ENCODE measurements at regions of chr22 and their contacts with region 1.

Region 1: DNA sequence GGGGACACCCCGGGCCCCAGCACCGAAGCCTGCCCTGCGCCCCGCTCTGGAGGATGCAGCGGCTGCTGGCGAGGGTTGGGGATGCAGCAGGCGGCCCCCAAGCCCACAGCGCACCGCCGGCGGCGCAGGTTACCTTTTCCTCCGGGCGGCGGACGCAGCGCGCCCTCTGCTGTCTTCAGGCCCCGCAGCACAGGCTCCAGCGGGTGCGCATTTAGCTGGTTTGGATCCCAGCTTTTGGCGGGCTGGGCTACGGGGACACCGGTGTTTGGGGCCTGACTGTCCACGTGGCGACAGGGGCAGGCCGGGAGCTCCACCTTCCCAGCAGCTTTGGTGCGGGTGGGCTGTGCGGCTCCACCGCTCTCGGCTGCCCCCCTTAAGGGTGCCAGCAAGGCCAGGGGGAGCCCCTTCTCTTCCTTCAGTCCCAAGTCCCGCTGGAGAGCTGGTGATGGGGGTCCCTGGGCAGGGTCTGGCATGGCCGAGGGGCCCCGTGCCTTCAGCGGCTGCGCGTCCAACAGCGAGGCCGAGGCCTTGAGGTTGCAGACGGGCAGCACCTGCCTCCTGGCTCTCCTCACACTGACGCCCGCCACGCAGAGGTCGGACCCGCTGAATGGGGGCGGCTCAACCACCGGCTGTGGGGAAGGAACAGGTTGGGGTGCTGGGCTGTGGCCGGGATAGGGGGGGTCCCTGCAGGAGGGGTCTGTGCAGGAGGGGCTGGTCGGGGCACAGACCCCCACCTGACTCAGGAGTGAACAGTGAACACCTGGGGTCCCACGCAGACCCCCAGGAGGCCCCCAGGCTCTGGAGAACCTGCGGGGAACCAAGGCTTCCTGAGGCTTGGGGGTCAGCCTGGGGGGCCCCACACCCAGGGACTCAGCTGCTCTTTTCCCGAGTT is 18.0 kb upstream of the IL17REL start:
- DNase-seq: peak; percentile 93
- ATAC-seq: peak; percentile 93
- H3K4me3 Mint-ChIP-seq: no peak overlapping the region
- H3K27ac Mint-ChIP-seq: no peak overlapping the region
- H3K4me1 Mint-ChIP-seq: no peaks in the 10 kb centered on the region
- H3K27me3 Mint-ChIP-seq: peaks cover 20% of the 10 kb centered on the region
- CTCF ChIP-seq: peak; percentile 63; the same call in 1 of the 2 replicates

Region 2: DNA sequence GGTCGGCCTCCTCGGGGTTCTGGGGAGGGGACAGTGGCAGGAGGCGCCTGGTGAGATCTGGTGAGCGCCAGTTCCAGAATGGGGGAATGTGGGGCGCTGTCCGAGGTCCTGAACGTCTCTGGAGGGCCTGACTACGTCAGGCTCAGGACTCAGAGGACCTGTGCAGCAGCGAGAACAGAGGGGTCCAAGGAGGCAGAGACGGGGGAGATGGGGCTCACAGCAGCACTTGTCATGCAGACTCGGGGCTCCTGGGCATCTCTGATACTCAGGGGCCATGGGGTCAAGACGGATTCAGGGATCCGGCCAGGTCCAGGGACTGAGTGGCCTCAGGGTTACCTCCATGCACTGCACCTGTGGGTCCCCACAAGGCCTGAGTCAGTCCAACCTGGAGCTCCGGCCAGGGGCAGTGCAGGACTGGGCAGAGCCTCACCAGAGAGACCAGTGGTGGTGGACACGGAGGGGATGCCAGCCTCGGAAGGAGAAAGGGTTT is 295.1 kb before region 1 on chr22:
- CTCF ChIA-PET with region 1: no interaction called
- POLR2A ChIA-PET with region 1: no interaction called
- DNase-seq: peak; percentile 81
- ATAC-seq: peak; percentile 84
- H3K4me3 Mint-ChIP-seq: no peak overlapping the region
- H3K27ac Mint-ChIP-seq: no peak overlapping the region
- H3K4me1 Mint-ChIP-seq: peaks cover 5% of the 10 kb centered on the region
- H3K27me3 Mint-ChIP-seq: peaks cover 19% of the 10 kb centered on the region
- CTCF ChIP-seq: no peak

Region 3: GRCh38 chr22:49906071-49906932 is 124.2 kb before region 1 on chr22:
- CTCF ChIA-PET with region 1: no interaction called
- POLR2A ChIA-PET with region 1: no interaction called
- DNase-seq: no peak
- ATAC-seq: no peak
- H3K4me3 Mint-ChIP-seq: no peak overlapping the region
- H3K27ac Mint-ChIP-seq: no peak overlapping the region
- H3K4me1 Mint-ChIP-seq: no peaks in the 10 kb centered on the region
- H3K27me3 Mint-ChIP-seq: no peaks in the 10 kb centered on the region
- CTCF ChIP-seq: no peak

Region 4: GRCh38 chr22:49925525-49926128 is 104.9 kb before region 1 on chr22:
- CTCF ChIA-PET with region 1: interaction called, 75 read pairs
- POLR2A ChIA-PET with region 1: interaction called, 4 read pairs
- DNase-seq: no peak
- ATAC-seq: no peak
- H3K4me3 Mint-ChIP-seq: no peak overlapping the region
- H3K27ac Mint-ChIP-seq: peak overlapping the region; percentile 86
- H3K4me1 Mint-ChIP-seq: peaks cover 8% of the 10 kb centered on the region
- H3K27me3 Mint-ChIP-seq: peaks cover 7% of the 10 kb centered on the region
- CTCF ChIP-seq: no peak

Region 5: GRCh38 chr22:49951000-49951677 is 79.4 kb before region 1 on chr22:
- CTCF ChIA-PET with region 1: interaction called, 15 read pairs
- POLR2A ChIA-PET with region 1: no interaction called
- DNase-seq: no peak
- ATAC-seq: no peak
- H3K4me3 Mint-ChIP-seq: no peak overlapping the region
- H3K27ac Mint-ChIP-seq: no peak overlapping the region
- H3K4me1 Mint-ChIP-seq: peaks cover 8% of the 10 kb centered on the region
- H3K27me3 Mint-ChIP-seq: no peaks in the 10 kb centered on the region
- CTCF ChIP-seq: no peak

Region 6: GRCh38 chr22:49979587-49980264 is 50.8 kb before region 1 on chr22:
- CTCF ChIA-PET with region 1: interaction called, 62 read pairs
- POLR2A ChIA-PET with region 1: no interaction called
- DNase-seq: peak; percentile 53
- ATAC-seq: peak; percentile 82
- H3K4me3 Mint-ChIP-seq: no peak overlapping the region
- H3K27ac Mint-ChIP-seq: no peak overlapping the region
- H3K4me1 Mint-ChIP-seq: peaks cover 3% of the 10 kb centered on the region; the same call in 1 of the 2 replicates
- H3K27me3 Mint-ChIP-seq: peaks cover 22% of the 10 kb centered on the region
- CTCF ChIP-seq: peak; percentile 39; the same call in 1 of the 2 replicates

Region 7: GRCh38 chr22:50012716-50013181 is 17.8 kb before region 1 on chr22 and contains the start of gene IL17REL:
- CTCF ChIA-PET with region 1: interaction called, 25 read pairs
- POLR2A ChIA-PET with region 1: no interaction called
- DNase-seq: no peak
- ATAC-seq: no peak
- H3K4me3 Mint-ChIP-seq: peak within 1 kb of the TSS; percentile 65
- H3K27ac Mint-ChIP-seq: no peak within 1 kb of the TSS
- H3K4me1 Mint-ChIP-seq: peaks cover 16% of the 10 kb centered on the region
- H3K27me3 Mint-ChIP-seq: peaks cover 55% of the 10 kb centered on the region
- CTCF ChIP-seq: no peak
- total RNA-seq, gene IL17REL: 0.23 to 0.34 TPM (median 0.24 TPM) in 3 replicates

Region 8: DNA sequence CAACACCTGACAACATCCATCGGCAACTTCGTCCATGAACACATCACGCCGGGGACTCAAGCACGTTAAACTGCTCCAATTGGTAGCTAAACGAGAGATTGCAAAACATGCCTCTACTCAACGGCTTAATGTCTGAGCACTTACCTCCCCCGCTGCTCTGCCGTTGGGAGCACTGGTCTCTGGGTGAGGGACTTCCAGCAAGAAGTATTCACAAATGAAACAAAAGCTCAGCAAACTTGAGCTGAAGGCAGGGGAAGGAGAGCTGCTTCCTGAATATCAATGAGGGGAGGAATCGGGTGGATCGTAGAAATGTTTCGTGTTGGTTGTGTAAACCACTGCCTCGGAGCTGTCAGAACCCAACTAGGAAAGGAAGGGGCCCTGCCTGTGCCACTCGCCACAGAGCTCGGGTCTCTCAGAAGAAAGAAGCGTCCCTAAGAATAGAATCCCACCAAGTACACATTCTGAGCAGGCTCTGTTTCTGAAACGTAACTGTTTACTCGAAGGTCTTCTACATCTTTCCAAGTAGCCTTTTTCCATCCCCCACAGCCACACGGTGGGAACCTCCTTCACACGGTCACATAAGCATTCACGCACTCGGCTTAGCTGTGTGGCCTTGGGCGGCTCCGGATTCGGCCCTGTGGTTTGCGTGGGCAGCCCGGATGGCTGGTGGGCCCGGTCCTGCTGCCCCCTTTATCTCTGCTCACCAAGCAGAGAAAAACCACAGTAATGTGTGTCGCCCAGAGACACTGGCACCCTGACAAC is 54.8 kb after region 1 on chr22 and contains the start of gene MLC1:
- CTCF ChIA-PET with region 1: interaction called, 16 read pairs
- POLR2A ChIA-PET with region 1: no interaction called
- DNase-seq: no peak
- ATAC-seq: peak; percentile 55
- H3K4me3 Mint-ChIP-seq: peak within 1 kb of the TSS; percentile 22
- H3K27ac Mint-ChIP-seq: no peak within 1 kb of the TSS
- H3K4me1 Mint-ChIP-seq: no peaks in the 10 kb centered on the region; the same call in 1 of the 2 replicates
- H3K27me3 Mint-ChIP-seq: peaks cover 8% of the 10 kb centered on the region; the same call in 1 of the 2 replicates
- CTCF ChIP-seq: no peak
- total RNA-seq, gene MLC1: 0.13 to 0.16 TPM (median 0.16 TPM) in 3 replicates